Adrenal gland (tissue), 19 donors: ENCODE measurements at regions of chr3 and their contacts with region 1.

Region 1: GRCh38 chr3:57755668-57756527 is at the start of gene SLMAP:
- DNase-seq: peak; percentile 97 to 99 (median 98)
- H3K4me3 ChIP-seq: peak within 1 kb of the TSS; percentile 77 to 96 (median 94)
- H3K27ac ChIP-seq: peak within 1 kb of the TSS; percentile 47 to 92 (median 89)
- H3K4me1 ChIP-seq: peaks cover 15 to 29% of the 10 kb centered on the region in 2 donors
- H3K27me3 ChIP-seq: no peaks in the 10 kb centered on the region
- CTCF ChIP-seq: no peak
- POLR2A ChIP-seq: peak; percentile 62 to 87
- total RNA-seq, gene SLMAP: 56.4 to 134 (median 101) TPM

Region 2: DNA sequence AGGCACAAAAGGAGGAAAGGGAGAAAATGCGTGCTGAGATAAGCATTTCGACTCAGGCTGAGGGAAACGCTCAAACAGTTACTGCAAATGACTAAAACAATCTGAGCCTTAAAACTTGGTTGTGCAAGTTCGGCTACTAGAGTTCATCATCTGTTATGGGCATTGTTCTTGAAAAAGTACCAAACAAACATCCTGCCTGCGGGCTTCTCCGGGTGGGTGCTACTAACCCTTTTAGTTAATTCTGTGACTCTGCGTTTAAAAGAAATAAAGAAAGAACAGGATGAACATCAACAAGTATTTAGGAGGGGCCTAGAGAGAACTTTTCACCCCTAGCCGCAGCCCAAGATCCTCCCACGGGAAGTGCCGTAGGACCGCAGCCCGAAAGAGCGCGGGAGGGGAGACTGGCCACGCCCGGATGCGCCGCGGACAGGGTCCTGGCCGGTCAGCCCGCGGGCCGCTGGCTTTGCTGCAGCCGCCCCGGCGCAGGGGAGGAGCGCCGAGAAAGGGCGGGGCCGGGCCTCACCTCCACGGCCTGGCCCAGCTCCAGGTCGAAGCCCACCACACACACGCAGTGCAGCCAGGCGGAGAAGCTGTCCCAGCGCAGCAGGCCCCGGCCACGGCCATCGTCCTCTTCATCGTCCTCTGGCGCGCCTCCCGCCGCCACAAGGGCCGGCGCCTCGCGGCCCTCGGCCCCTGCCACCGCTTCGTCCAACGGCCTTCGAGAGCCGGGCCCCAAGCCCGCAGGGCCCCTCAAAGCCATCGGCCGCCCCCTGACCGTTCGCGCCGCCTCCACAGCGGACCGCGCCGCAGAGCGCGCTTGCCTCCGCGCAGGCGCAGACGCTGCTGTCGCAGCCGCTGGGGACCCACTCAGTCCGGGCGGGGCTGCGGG is 63.4 kb before region 1 on chr3 and contains the start of gene DENND6A:
- intact Hi-C with region 1: loop called in 1 of 2 experiments (anchors 5 kb)
- DNase-seq: peak; percentile 85 to 96 (median 88)
- H3K4me3 ChIP-seq: peak within 1 kb of the TSS; percentile 71 to 94 (median 81)
- H3K27ac ChIP-seq: peak within 1 kb of the TSS; percentile 81 to 99 (median 97)
- H3K4me1 ChIP-seq: peaks cover 9 to 29% of the 10 kb centered on the region in 2 donors
- H3K27me3 ChIP-seq: no peaks in the 10 kb centered on the region
- CTCF ChIP-seq: peak in 1 of 6 experiments; percentile 16
- POLR2A ChIP-seq: peak; percentile 96 to 98
- total RNA-seq, gene DENND6A: 13.2 to 29.3 (median 24.7) TPM

Region 3: GRCh38 chr3:57820479-57820878 is 64.6 kb after region 1 on chr3:
- intact Hi-C with region 1: loop called (anchors 5 to 10 kb)
- DNase-seq: no peak
- H3K4me3 ChIP-seq: no peak overlapping the region
- H3K27ac ChIP-seq: no peak overlapping the region
- H3K4me1 ChIP-seq: peaks cover 23 to 48% of the 10 kb centered on the region in 2 donors
- H3K27me3 ChIP-seq: no peaks in the 10 kb centered on the region
- CTCF ChIP-seq: no peak
- POLR2A ChIP-seq: no peak

Region 4: GRCh38 chr3:57826245-57826951 is 70.5 kb after region 1 on chr3:
- intact Hi-C with region 1: loop called (anchors 5 to 10 kb)
- DNase-seq: no peak
- H3K4me3 ChIP-seq: no peak overlapping the region
- H3K27ac ChIP-seq: peak overlapping the region in 4 of 5 donors; percentile 4 to 29 (median 18)
- H3K4me1 ChIP-seq: peaks cover 36 to 55% of the 10 kb centered on the region in 2 donors
- H3K27me3 ChIP-seq: no peaks in the 10 kb centered on the region
- CTCF ChIP-seq: peak in 4 of 6 experiments; percentile 9 to 50 (median 40)
- POLR2A ChIP-seq: no peak